K562 (cell line): ENCODE measurements at regions of chr20 and their contacts with region 1.

Region 1: DNA sequence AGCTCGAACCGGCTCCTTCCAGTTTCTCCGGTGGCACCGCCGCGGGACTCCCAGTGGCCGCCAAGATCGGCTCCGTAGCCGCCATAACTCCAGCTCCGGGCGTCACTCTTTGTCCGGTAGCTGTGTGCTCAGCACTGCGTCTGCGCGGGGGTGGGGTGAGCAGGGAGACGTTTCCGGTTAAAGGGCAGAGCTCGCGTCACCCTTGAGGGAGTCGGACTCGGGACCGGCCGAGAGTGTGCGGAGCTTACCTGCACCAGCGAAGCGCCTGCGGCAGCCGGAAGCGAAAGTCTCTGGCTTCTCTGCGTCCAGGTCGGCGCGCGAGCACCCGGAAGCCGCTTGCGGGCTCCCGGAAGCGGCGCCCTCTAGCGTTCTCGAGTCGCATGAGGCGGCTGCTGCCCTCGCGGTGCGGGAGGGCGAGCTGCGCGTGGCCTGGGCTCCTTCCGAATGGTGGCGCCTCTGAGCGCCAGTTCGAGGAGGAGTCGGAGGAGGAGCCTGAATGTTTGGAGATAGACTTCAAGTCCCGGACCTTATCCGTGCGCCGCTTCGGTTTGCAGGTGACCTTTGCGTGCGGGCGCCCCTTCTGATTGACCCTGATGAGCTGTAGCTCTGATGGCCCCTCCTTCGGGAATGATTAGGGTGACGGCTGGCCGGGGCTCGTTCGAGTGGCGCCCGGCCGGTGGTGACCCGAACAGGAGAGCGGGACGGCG is at the start of gene SCAND1:
- DNase-seq: peak; percentile 93 to 98 (median 94)
- ATAC-seq: peak; percentile 93
- H3K4me3 ChIP-seq: peak within 1 kb of the TSS; percentile 95
- H3K27ac ChIP-seq: peak within 1 kb of the TSS; percentile 98
- H3K4me1 ChIP-seq: peaks cover 9 to 16% of the 10 kb centered on the region in 2 experiments; a peak in 4 of 5 replicates
- H3K27me3 ChIP-seq: no peaks in the 10 kb centered on the region
- CTCF ChIP-seq: peak; percentile 100
- EP300 ChIP-seq: peak; percentile 19
- POLR2A ChIP-seq: peak; percentile 93
- RAD21 ChIP-seq: peak; percentile 48 to 60
- polyA plus RNA-seq, gene SCAND1: 0.08 to 0.11 TPM

Region 2: GRCh38 chr20:35541783-35542588 is 412.4 kb before region 1 on chr20 and contains the start of gene ERGIC3:
- CTCF ChIA-PET with region 1: no interaction called
- POLR2A ChIA-PET with region 1: no interaction called
- in situ Hi-C with region 1: no loop called
- intact Hi-C with region 1: loop called (anchors 1 kb)
- DNase-seq: peak; percentile 95 to 98 (median 96)
- ATAC-seq: peak; percentile 99
- H3K4me3 ChIP-seq: peak within 1 kb of the TSS; percentile 72
- H3K27ac ChIP-seq: peak within 1 kb of the TSS; percentile 93
- H3K4me1 ChIP-seq: peaks cover 13% of the 10 kb centered on the region in 2 experiments; a peak in 3 of 5 replicates
- H3K27me3 ChIP-seq: no peaks in the 10 kb centered on the region
- CTCF ChIP-seq: 0 out of 6 replicates have a peak, but pooled peaks of 1 of the 3 experiments have one; percentile 4
- EP300 ChIP-seq: no peak
- POLR2A ChIP-seq: peak; percentile 92
- RAD21 ChIP-seq: no peak
- polyA plus RNA-seq, gene ERGIC3: 243 to 278 TPM

Region 3: DNA sequence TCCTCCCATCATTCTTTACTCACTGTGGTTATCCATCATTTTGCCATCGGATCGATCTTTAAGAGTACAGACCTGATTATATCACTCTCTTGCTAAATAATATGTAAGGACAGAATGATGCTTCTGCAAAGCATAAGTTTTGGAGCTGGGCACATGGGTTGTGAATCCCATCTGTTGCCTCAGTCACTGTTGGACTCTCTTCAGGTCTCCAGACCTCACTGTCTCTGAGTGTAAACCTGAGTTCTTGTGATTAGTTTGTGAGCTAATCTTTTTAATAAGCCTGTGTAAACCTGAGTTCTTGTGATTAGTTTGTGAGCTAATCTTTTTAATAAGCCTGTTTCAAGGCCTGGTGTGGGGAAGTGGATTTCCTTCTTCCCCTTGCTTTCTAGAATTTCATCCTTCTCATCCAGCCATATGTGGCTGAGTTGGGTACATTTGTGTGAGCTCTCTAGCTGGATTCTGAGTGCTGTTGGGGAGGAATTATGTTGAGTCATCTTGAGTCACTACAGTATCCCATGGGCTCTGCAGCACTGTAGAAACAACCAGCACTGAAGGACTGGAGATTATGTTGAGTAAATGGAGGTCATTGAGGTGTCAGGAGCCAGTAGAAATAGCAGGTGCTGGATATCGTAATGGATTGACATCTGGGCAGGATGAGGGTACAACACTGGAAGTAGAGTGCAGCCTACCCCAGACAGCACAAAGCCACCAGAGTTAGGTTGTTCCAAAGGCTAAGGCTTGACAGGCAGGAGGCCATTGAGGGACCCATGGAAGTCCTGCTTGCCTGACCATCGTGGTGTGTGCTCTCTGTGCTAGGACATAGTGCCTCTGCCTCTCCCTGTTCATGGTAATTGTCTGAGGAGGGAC is 52.4 kb before region 1 on chr20:
- CTCF ChIA-PET with region 1: no interaction called
- POLR2A ChIA-PET with region 1: interaction called, 3 read pairs
- in situ Hi-C with region 1: no loop called
- intact Hi-C with region 1: loop called (anchors 5 kb)
- DNase-seq: peak; percentile 49 to 85 (median 68)
- ATAC-seq: peak; percentile 94
- H3K4me3 ChIP-seq: no peak overlapping the region
- H3K27ac ChIP-seq: peak overlapping the region; percentile 78
- H3K4me1 ChIP-seq: peaks cover 19 to 41% of the 10 kb centered on the region in 2 experiments; a peak in 4 of 5 replicates
- H3K27me3 ChIP-seq: no peaks in the 10 kb centered on the region
- CTCF ChIP-seq: no peak
- EP300 ChIP-seq: peak; percentile 48
- POLR2A ChIP-seq: 0 out of 2 replicates have a peak, but pooled peaks have one; percentile 42
- RAD21 ChIP-seq: no peak

Region 4: DNA sequence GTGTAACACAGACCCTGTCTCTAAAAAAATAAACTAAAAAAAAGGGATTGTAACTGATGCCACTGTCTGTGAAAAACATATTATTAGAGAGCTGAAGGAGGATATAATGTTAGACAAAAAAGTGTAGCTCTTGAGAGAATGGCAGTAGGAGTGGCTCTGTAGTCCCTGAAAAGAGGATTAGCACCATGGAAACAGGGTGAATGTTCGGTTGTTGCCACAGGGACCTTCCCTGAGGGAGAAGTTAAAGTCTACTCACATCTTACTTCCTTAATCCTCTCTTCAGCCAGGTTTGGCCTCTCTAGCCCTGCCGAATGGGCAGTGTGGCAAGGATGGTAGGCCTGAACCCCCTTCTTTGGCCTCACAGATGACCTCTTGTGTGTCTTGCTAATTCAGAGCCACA is 12.1 kb before region 1 on chr20:
- CTCF ChIA-PET with region 1: no interaction called
- POLR2A ChIA-PET with region 1: interaction called, 43 read pairs
- in situ Hi-C with region 1: no loop called
- intact Hi-C with region 1: no loop called
- DNase-seq: no peak
- ATAC-seq: no peak
- H3K4me3 ChIP-seq: no peak overlapping the region
- H3K27ac ChIP-seq: no peak overlapping the region
- H3K4me1 ChIP-seq: no peaks in the 10 kb centered on the region
- H3K27me3 ChIP-seq: no peaks in the 10 kb centered on the region
- CTCF ChIP-seq: no peak
- EP300 ChIP-seq: no peak
- POLR2A ChIP-seq: no peak
- RAD21 ChIP-seq: no peak

Region 5: GRCh38 chr20:36043892-36044515 is 89.7 kb after region 1 on chr20:
- CTCF ChIA-PET with region 1: no interaction called
- POLR2A ChIA-PET with region 1: no interaction called
- in situ Hi-C with region 1: no loop called
- intact Hi-C with region 1: no loop called
- DNase-seq: peak in 1 of 4 experiments; percentile 30
- ATAC-seq: peak; percentile 64
- H3K4me3 ChIP-seq: no peak overlapping the region
- H3K27ac ChIP-seq: no peak overlapping the region
- H3K4me1 ChIP-seq: peaks cover 0 to 16% of the 10 kb centered on the region in 2 experiments; a peak in 4 of 5 replicates
- H3K27me3 ChIP-seq: no peaks in the 10 kb centered on the region
- CTCF ChIP-seq: peak in 1 of 3 experiments; percentile 16; a peak in 3 of 6 replicates
- EP300 ChIP-seq: no peak
- POLR2A ChIP-seq: no peak
- RAD21 ChIP-seq: no peak